Aorta (tissue), 5 donors: ENCODE measurements at regions of chr6 and their contacts with region 1.

Region 1: GRCh38 chr6:1624851-1625781 is 15.4 kb downstream of the FOXC1 start:
- DNase-seq: peak in 1 of 2 donors; percentile 77
- ATAC-seq: peak; percentile 67
- H3K4me3 ChIP-seq: peak overlapping the region; percentile 68 to 90
- H3K27ac ChIP-seq: peak overlapping the region; percentile 98 to 99
- H3K4me1 ChIP-seq: peaks cover 0 to 2% of the 10 kb centered on the region in 2 donors
- H3K27me3 ChIP-seq: no peaks in the 10 kb centered on the region

Region 2: DNA sequence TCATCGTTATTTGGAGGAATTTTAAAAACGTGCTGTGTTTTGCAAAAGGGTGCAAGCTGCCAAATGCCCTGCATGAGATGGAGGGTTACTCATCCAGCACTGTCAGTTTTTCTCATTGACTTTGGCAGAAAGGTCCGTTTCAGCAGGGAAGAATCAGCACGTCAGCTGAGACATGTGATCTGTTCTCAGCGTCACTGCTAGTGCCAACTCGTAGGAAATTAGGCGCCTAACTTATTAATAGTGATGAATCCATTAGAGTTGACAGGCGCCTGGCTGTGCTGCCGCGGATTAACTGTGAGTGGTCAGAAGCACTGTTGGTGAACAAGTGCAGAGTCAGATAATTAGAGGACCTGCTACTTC is 488.7 kb before region 1 on chr6:
- intact Hi-C with region 1: no loop called
- DNase-seq: no peak
- ATAC-seq: no peak
- H3K4me3 ChIP-seq: no peak overlapping the region
- H3K27ac ChIP-seq: no peak overlapping the region
- H3K4me1 ChIP-seq: no peaks in the 10 kb centered on the region
- H3K27me3 ChIP-seq: no peaks in the 10 kb centered on the region

Region 3: DNA sequence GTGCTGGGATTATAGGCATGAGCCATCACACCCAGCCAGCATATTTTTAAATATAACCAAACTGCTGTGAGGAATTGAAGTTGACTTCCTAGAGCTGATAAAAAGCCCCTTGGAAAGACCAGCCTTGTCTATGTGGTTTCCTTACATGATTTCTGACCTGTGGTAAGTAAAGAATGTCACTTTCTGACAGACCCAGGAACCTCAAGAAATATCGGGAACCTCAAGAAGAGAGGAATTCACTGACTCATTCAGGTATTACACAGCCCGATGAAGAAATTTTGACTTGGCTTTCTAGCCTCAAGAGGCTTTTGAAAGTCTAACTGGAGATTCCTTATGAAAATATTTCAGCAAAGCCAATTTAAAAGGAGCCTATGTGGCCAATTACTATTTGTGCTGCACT is 163.9 kb before region 1 on chr6:
- intact Hi-C with region 1: no loop called
- DNase-seq: no peak
- ATAC-seq: no peak
- H3K4me3 ChIP-seq: no peak overlapping the region
- H3K27ac ChIP-seq: no peak overlapping the region
- H3K4me1 ChIP-seq: no peaks in the 10 kb centered on the region
- H3K27me3 ChIP-seq: no peaks in the 10 kb centered on the region

Region 4: GRCh38 chr6:1477432-1478090 is 147.6 kb before region 1 on chr6:
- intact Hi-C with region 1: no loop called
- DNase-seq: no peak
- ATAC-seq: no peak
- H3K4me3 ChIP-seq: peak overlapping the region in 1 of 2 donors; percentile 4
- H3K27ac ChIP-seq: no peak overlapping the region
- H3K4me1 ChIP-seq: no peaks in the 10 kb centered on the region
- H3K27me3 ChIP-seq: no peaks in the 10 kb centered on the region

Region 5: DNA sequence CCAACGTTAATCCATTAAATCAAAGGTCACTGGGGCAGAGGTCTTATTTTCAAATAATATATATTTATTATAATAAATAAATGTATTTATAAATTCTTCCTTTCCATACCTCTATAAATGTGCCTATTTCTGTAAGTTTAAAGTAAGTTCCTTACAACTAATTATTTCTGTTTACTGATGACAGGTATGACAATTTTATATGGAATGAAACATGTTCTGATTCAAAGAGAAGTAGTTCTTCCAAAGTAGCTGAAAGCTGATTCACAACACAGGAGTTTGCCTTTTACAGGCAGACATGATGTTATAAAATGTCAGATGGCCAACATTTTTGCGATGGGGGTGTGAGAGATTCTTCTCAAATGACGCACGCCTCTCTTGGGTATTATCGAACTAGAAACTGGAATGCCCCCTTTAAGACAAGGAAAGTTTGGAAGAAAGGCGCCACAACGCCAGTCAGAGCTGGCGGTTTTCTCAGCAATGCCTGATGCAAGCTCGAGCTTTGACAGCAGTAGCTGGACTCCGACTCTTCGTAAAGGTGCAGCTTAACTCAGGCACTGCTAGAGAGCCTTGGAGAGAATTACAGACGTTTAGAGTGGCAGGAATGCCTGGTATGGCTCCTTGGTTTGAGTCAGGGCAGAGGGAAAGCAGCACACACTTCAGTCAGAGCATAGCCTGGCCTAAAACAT is 76.7 kb after region 1 on chr6:
- intact Hi-C with region 1: loop called in 1 of 2 experiments (anchors 5 kb)
- DNase-seq: peak; percentile 71 to 83
- ATAC-seq: peak; percentile 77
- H3K4me3 ChIP-seq: no peak overlapping the region
- H3K27ac ChIP-seq: peak overlapping the region; percentile 91 to 92
- H3K4me1 ChIP-seq: peaks cover 0 to 18% of the 10 kb centered on the region in 2 donors
- H3K27me3 ChIP-seq: no peaks in the 10 kb centered on the region

Region 6: DNA sequence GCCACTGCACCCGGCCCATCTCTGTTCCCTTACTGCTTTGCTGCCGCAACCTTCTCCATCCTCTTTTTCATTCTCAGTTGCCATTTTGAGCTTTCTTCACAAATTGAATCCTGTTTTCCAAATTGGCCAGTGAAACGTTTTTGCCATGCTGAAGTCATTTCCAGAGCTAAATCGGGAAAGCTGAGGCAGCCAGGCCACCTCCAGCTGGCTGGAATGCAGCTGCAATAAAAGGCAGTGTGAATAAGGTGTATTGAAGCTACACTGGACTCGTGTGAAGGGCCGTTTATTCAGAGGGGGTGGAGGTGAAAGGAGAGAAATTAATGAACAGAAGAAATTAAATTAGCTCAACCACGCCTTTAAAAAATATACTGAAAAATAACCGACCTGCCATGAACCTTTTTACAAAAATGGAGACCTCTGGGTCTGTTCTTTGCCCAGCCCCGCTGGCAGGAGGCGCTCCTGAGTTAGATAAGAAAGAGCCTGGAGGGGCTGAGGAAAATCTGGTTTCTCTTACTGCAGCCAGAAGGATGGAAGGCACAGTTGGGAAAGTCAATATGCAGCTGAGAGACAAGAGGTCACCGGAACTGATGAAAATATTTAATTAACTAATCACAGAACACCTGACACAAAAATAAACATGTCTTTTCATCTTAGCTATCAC is 268.5 kb after region 1 on chr6:
- intact Hi-C with region 1: loop called in 1 of 2 experiments (anchors 5 kb)
- DNase-seq: no peak
- ATAC-seq: peak; percentile 51
- H3K4me3 ChIP-seq: no peak overlapping the region
- H3K27ac ChIP-seq: peak overlapping the region; percentile 93 to 94
- H3K4me1 ChIP-seq: peaks cover 0 to 10% of the 10 kb centered on the region in 2 donors
- H3K27me3 ChIP-seq: no peaks in the 10 kb centered on the region

Region 7: GRCh38 chr6:2037237-2037926 is 412.3 kb after region 1 on chr6:
- intact Hi-C with region 1: loop called in 1 of 2 experiments (anchors 5 kb)
- DNase-seq: no peak
- ATAC-seq: no peak
- H3K4me3 ChIP-seq: no peak overlapping the region
- H3K27ac ChIP-seq: peak overlapping the region in 1 of 2 donors; percentile 40
- H3K4me1 ChIP-seq: no peaks in the 10 kb centered on the region
- H3K27me3 ChIP-seq: no peaks in the 10 kb centered on the region